PC-9 (cell line): ENCODE measurements at regions of chr1 and their contacts with region 1.

Region 1: GRCh38 chr1:182910143-182910542 is 42.8 kb downstream of the SHCBP1L start:
- DNase-seq: no peak
- H3K4me3 ChIP-seq: no peak overlapping the region
- H3K27ac ChIP-seq: no peak overlapping the region
- H3K4me1 ChIP-seq: no peaks in the 10 kb centered on the region
- H3K27me3 ChIP-seq: no peaks in the 10 kb centered on the region
- CTCF ChIP-seq: no peak; the same call in 1 of the 2 replicates

Region 2: DNA sequence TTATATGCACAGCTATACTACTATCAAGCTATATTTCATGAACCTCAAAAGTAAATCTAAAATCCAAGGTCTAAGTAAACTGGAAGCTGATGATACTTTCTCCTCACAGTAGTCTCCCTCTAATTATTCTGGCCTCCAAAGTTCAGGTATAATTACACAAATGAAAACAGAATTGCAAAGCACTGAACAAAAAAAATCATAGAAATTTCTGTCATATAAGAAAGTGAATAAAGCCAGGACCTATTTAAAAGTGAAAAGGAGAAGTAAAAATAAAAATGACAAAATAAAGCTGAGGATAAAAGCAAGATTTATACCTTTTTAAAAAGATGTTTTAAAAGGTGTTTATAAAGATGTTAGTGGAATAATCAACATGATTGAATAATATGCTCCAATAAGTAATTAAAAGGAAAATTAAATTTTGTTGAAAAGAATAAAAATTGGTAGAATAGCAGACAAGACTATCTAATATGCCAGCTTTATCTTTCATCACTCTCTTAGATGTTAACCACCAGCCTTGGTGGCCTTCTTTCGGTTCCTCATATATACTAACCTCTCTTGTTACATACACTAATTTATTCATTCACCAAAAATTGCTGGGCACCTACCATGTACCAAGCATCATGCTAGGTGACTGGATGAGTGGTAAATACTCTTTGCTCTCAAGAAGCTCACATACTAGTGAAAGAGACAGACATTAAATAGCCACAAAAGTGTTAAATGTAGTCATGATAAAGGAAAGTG is 17.7 kb after region 1 on chr1:
- CTCF ChIA-PET with region 1: interaction called, 11 read pairs
- POLR2A ChIA-PET with region 1: no interaction called
- intact Hi-C with region 1: no loop called
- DNase-seq: no peak
- H3K4me3 ChIP-seq: no peak overlapping the region
- H3K27ac ChIP-seq: no peak overlapping the region
- H3K4me1 ChIP-seq: no peaks in the 10 kb centered on the region
- H3K27me3 ChIP-seq: no peaks in the 10 kb centered on the region
- CTCF ChIP-seq: no peak

Region 3: DNA sequence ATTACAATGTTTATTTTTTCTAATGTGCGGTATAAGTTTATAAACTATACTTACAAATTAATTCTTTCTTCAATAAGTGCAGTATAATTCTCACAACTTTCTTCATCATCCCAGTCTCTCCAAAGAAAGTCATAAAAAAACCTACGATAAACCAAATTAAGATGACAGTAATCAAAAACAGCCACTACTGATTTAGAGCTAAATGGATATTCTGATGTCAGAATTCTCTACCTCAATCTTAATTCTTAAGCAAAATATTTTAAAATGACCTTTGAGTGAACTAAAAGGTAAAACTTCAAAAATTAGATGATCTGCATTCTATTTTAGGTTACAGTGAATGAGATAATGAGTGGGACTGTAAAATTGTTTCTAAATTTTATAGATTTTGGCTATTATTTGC is 29.3 kb after region 1 on chr1:
- CTCF ChIA-PET with region 1: no interaction called
- POLR2A ChIA-PET with region 1: no interaction called
- intact Hi-C with region 1: loop called (anchors 2 kb)
- DNase-seq: no peak
- H3K4me3 ChIP-seq: no peak overlapping the region
- H3K27ac ChIP-seq: no peak overlapping the region
- H3K4me1 ChIP-seq: no peaks in the 10 kb centered on the region
- H3K27me3 ChIP-seq: no peaks in the 10 kb centered on the region
- CTCF ChIP-seq: no peak